Esophagus muscularis mucosa (tissue), 4 donors: ENCODE measurements at regions of chr6 and their contacts with region 1.

Region 1: DNA sequence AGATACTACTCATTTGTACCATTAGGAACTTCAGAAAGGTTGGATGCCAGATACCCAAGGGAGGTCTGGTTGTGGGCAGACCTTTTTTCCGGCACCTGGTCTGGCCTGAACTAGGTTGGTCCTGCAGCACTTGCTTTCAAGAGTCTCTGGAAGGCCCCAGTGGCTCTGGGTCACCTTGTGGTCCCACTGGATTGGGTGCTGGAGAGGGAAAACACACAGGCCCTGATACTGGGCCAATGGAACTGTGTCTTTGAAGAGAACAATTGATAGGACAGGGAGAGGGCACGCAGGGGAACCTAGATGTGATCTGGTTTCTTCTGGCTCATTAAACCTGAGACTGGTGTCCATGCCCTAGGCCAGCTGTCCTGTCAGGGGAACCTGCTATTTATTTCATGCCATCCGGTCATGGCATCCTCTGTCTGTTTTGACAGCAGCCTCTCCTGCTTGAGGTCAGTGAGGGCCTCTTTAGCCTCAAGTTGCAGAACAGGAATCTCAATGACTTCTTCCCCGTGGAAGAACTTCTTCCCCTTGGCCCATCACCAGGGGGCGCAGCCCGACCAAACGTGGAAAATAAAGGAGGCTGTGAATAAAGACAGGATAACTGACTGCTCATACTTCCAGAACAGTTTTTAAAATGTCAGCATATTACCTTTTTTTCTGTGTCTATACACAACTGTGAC is 25.0 kb downstream of the TAF8 start:
- DNase-seq: no peak
- H3K4me3 ChIP-seq: no peak overlapping the region
- H3K27ac ChIP-seq: no peak overlapping the region
- H3K4me1 ChIP-seq: peaks cover 0 to 2% (median 0%) of the 10 kb centered on the region in 4 donors
- H3K27me3 ChIP-seq: no peaks in the 10 kb centered on the region
- CTCF ChIP-seq: peak; percentile 73 to 79 (median 74)
- EP300 ChIP-seq: no peak
- POLR2A ChIP-seq: no peak

Region 2: GRCh38 chr6:42166444-42167141 is 91.3 kb after region 1 on chr6:
- intact Hi-C with region 1: loop called (anchors 1 kb)
- DNase-seq: peak; percentile 95
- H3K4me3 ChIP-seq: no peak overlapping the region
- H3K27ac ChIP-seq: no peak overlapping the region
- H3K4me1 ChIP-seq: no peaks in the 10 kb centered on the region
- H3K27me3 ChIP-seq: peaks cover 0 to 5% (median 0%) of the 10 kb centered on the region in 4 donors
- CTCF ChIP-seq: peak; percentile 85 to 95 (median 87)
- EP300 ChIP-seq: no peak
- POLR2A ChIP-seq: no peak

Region 3: GRCh38 chr6:42217519-42218367 is 142.4 kb after region 1 on chr6 and contains the start of gene MRPS10:
- intact Hi-C with region 1: loop called (anchors 2 kb)
- DNase-seq: peak; percentile 98
- H3K4me3 ChIP-seq: peak within 1 kb of the TSS; percentile 65 to 77 (median 71)
- H3K27ac ChIP-seq: peak within 1 kb of the TSS; percentile 73 to 87 (median 81)
- H3K4me1 ChIP-seq: peaks cover 20 to 33% (median 29%) of the 10 kb centered on the region in 4 donors
- H3K27me3 ChIP-seq: no peaks in the 10 kb centered on the region
- CTCF ChIP-seq: peak in 1 of 3 experiments; percentile 37
- EP300 ChIP-seq: no peak
- POLR2A ChIP-seq: peak; percentile 65
- total RNA-seq, gene MRPS10: 27.8 to 38.8 (median 29.3) TPM

Region 4: GRCh38 chr6:42390228-42390934 is 315.1 kb after region 1 on chr6:
- intact Hi-C with region 1: no loop called
- DNase-seq: no peak
- H3K4me3 ChIP-seq: no peak overlapping the region
- H3K27ac ChIP-seq: no peak overlapping the region
- H3K4me1 ChIP-seq: peaks cover 0 to 5% (median 2%) of the 10 kb centered on the region in 4 donors
- H3K27me3 ChIP-seq: no peaks in the 10 kb centered on the region
- CTCF ChIP-seq: no peak
- EP300 ChIP-seq: no peak
- POLR2A ChIP-seq: no peak

Region 5: GRCh38 chr6:42547407-42548329 is 472.4 kb after region 1 on chr6:
- intact Hi-C with region 1: loop called (anchors 5 kb)
- DNase-seq: peak; percentile 94
- H3K4me3 ChIP-seq: peak overlapping the region; percentile 51 to 60 (median 52)
- H3K27ac ChIP-seq: peak overlapping the region; percentile 60 to 74 (median 70)
- H3K4me1 ChIP-seq: peaks cover 4 to 14% (median 12%) of the 10 kb centered on the region in 4 donors
- H3K27me3 ChIP-seq: no peaks in the 10 kb centered on the region
- CTCF ChIP-seq: peak; percentile 93 to 97 (median 93)
- EP300 ChIP-seq: no peak
- POLR2A ChIP-seq: no peak